GM12878 (cell line): ENCODE measurements at regions of chr2 and their contacts with region 1.

Region 1: DNA sequence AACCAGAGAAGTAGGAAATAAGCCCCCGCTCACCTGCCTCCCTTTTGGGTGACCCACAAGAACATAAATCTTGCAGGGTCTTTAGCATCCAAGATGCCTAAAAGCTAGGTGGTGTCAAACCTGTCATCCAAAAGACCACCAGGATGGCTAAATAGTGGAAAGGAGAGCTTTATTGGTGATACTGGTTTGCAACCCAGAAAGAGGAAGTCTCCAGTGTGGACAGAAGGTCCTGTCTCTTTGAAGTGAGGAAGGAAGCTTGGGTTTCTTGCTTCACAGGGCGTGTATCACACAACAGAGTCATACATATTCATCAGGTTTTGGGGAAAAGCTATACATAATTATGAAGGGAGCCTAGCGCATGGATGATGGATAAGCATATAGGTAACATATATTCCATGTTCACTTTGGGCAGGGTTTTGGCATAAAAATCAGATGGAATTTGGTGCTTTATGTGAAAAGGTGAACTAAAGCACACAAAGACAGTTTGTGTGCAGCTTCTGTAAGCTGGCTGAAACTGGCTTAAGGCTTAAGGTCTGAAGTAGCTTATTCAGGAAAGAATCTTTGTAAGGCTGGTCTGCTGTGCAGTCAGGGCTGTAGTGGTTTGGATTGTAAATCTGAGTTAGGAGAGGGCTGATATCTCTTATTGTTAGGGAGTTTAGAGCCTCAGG is 102.2 kb upstream of the MSH2 start:
- DNase-seq: peak; percentile 64
- ATAC-seq: peak; percentile 91
- H3K4me3 ChIP-seq: peak overlapping the region; percentile 52
- H3K27ac ChIP-seq: peak overlapping the region; percentile 65
- H3K4me1 ChIP-seq: peaks cover 29% of the 10 kb centered on the region
- H3K27me3 ChIP-seq: no peaks in the 10 kb centered on the region
- CTCF ChIP-seq: no peak
- EP300 ChIP-seq: peak in 1 of 2 experiments; percentile 11; a peak in 1 of 4 replicates
- POLR2A ChIP-seq: no peak
- RAD21 ChIP-seq: no peak

Region 2: GRCh38 chr2:46984642-46985476 is 315.9 kb before region 1 on chr2:
- CTCF ChIA-PET with region 1: interaction called, 5 read pairs
- POLR2A ChIA-PET with region 1: interaction called, 8 read pairs
- RAD21 ChIA-PET with region 1: no interaction called
- SMC1A ChIA-PET with region 1: interaction called, 14 read pairs
- in situ Hi-C with region 1: no loop called
- intact Hi-C with region 1: no loop called
- DNase-seq: peak; percentile 79
- ATAC-seq: peak; percentile 63
- H3K4me3 ChIP-seq: peak overlapping the region; percentile 37; the same call in 1 of the 2 replicates
- H3K27ac ChIP-seq: peak overlapping the region; percentile 89
- H3K4me1 ChIP-seq: peaks cover 58% of the 10 kb centered on the region
- H3K27me3 ChIP-seq: no peaks in the 10 kb centered on the region
- CTCF ChIP-seq: no peak
- EP300 ChIP-seq: peak; percentile 25 to 49; a peak in 2 of 4 replicates
- POLR2A ChIP-seq: peak; percentile 68
- RAD21 ChIP-seq: no peak

Region 3: GRCh38 chr2:47165001-47165555 is 135.7 kb before region 1 on chr2:
- CTCF ChIA-PET with region 1: no interaction called
- POLR2A ChIA-PET with region 1: interaction called, 10 read pairs
- RAD21 ChIA-PET with region 1: no interaction called
- SMC1A ChIA-PET with region 1: interaction called, 8 read pairs
- in situ Hi-C with region 1: no loop called
- intact Hi-C with region 1: no loop called
- DNase-seq: no peak
- ATAC-seq: peak; percentile 25; the same call in 2 of the 3 replicates
- H3K4me3 ChIP-seq: no peak overlapping the region
- H3K27ac ChIP-seq: no peak overlapping the region
- H3K4me1 ChIP-seq: no peaks in the 10 kb centered on the region
- H3K27me3 ChIP-seq: no peaks in the 10 kb centered on the region
- CTCF ChIP-seq: no peak
- EP300 ChIP-seq: no peak
- POLR2A ChIP-seq: no peak
- RAD21 ChIP-seq: no peak

Region 4: DNA sequence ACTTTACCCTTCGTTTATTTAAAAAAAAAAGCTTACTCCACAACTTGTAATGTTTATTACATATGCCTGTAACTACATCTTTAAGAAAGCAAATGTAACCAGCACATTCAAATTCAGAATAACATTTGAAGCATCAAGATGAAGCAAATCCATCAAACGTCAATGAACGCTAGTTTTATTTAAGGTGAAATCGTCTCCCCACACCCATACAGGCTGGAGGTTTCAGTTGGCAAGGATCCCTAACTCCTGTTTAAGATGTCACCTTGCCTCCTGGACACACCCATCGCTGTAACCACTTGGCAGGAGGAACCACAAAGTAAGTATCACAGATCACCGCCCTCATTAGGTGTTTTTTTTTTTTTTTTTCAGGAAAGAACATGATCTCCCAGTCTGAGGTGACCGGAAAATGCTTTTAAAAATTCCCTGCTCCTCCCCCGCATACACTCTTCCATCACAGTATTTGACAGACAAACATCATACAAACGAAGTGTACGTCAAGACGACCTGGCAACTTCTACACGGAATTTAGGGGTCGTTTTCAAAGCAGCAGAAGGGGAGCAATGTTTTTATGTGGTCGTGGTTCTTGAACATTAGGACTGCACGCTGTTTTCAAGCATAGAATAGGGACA is 125.9 kb before region 1 on chr2:
- CTCF ChIA-PET with region 1: interaction called, 5 read pairs
- POLR2A ChIA-PET with region 1: interaction called, 10 read pairs
- RAD21 ChIA-PET with region 1: interaction called, 22 read pairs
- SMC1A ChIA-PET with region 1: interaction called, 11 read pairs
- in situ Hi-C with region 1: no loop called
- intact Hi-C with region 1: no loop called
- DNase-seq: no peak
- ATAC-seq: peak; percentile 37
- H3K4me3 ChIP-seq: peak overlapping the region; percentile 98
- H3K27ac ChIP-seq: peak overlapping the region; percentile 100
- H3K4me1 ChIP-seq: peaks cover 7% of the 10 kb centered on the region
- H3K27me3 ChIP-seq: no peaks in the 10 kb centered on the region
- CTCF ChIP-seq: no peak
- EP300 ChIP-seq: no peak
- POLR2A ChIP-seq: no peak
- RAD21 ChIP-seq: no peak

Region 5: GRCh38 chr2:47272031-47272864 is 28.5 kb before region 1 on chr2:
- CTCF ChIA-PET with region 1: interaction called, 27 read pairs
- POLR2A ChIA-PET with region 1: interaction called, 25 read pairs
- RAD21 ChIA-PET with region 1: interaction called, 18 read pairs
- SMC1A ChIA-PET with region 1: interaction called, 88 read pairs
- in situ Hi-C with region 1: no loop called
- intact Hi-C with region 1: no loop called
- DNase-seq: no peak
- ATAC-seq: peak; percentile 97
- H3K4me3 ChIP-seq: peak overlapping the region; percentile 71
- H3K27ac ChIP-seq: peak overlapping the region; percentile 20; the same call in 1 of the 2 replicates
- H3K4me1 ChIP-seq: peaks cover 18% of the 10 kb centered on the region
- H3K27me3 ChIP-seq: no peaks in the 10 kb centered on the region
- CTCF ChIP-seq: peak; percentile 84 to 98 (median 92)
- EP300 ChIP-seq: no peak
- POLR2A ChIP-seq: peak; percentile 74
- RAD21 ChIP-seq: peak; percentile 52

Region 6: GRCh38 chr2:47283659-47284058 is 17.1 kb before region 1 on chr2:
- CTCF ChIA-PET with region 1: interaction called, 10 read pairs
- POLR2A ChIA-PET with region 1: interaction called, 5 read pairs
- RAD21 ChIA-PET with region 1: interaction called, 6 read pairs
- SMC1A ChIA-PET with region 1: interaction called, 8 read pairs
- in situ Hi-C with region 1: no loop called
- intact Hi-C with region 1: no loop called
- DNase-seq: no peak
- ATAC-seq: no peak
- H3K4me3 ChIP-seq: no peak overlapping the region
- H3K27ac ChIP-seq: no peak overlapping the region
- H3K4me1 ChIP-seq: no peaks in the 10 kb centered on the region
- H3K27me3 ChIP-seq: no peaks in the 10 kb centered on the region
- CTCF ChIP-seq: no peak
- EP300 ChIP-seq: no peak
- POLR2A ChIP-seq: no peak
- RAD21 ChIP-seq: no peak

Region 7: DNA sequence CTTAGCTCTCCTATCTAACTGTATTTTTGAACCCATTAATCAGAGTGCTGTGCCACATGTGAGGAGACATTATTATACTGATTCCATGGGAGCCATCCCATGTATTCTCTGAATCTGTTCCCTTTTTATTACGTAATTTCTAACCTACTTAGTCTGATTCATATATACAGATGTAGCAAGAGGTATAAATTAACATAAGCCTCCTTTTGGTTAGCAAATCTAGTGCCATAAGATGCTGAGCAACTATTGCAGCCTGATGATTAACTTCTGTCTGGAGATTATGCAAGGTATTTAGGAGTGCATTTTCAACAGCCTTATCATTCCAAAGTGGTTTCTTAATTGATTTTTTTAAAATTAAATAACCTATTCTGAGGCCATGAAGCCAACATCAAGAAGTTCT is 11.9 kb before region 1 on chr2:
- CTCF ChIA-PET with region 1: interaction called, 10 read pairs
- POLR2A ChIA-PET with region 1: interaction called, 8 read pairs
- RAD21 ChIA-PET with region 1: interaction called, 11 read pairs
- SMC1A ChIA-PET with region 1: interaction called, 13 read pairs
- in situ Hi-C with region 1: no loop called
- intact Hi-C with region 1: no loop called
- DNase-seq: no peak
- ATAC-seq: no peak
- H3K4me3 ChIP-seq: no peak overlapping the region
- H3K27ac ChIP-seq: no peak overlapping the region
- H3K4me1 ChIP-seq: no peaks in the 10 kb centered on the region
- H3K27me3 ChIP-seq: no peaks in the 10 kb centered on the region
- CTCF ChIP-seq: no peak
- EP300 ChIP-seq: no peak
- POLR2A ChIP-seq: no peak
- RAD21 ChIP-seq: no peak